Transverse colon (tissue), 4 donors: ENCODE measurements at regions of chr4 and their contacts with region 1.

Region 1: DNA sequence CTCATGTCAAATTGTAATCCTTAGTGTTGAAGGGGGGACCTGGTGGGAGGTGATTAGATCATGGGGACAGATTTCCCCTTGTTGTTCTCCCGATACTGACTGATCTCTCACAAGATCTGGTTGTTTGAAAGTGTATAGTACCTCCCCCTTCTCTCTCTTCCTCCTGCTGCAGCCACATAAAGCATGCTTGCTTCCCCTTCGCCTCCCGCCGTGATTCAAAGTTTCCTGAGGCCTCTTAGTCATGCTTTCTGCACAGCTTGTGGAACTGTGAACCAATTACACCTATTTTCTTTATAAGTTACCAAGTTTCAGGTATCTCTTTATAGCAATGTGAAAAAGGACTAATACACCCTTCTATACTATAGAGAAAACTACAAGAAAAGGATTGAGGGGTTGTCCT is 1170.5 kb upstream of the AGA start:
- DNase-seq: no peak
- H3K4me3 ChIP-seq: no peak overlapping the region
- H3K27ac ChIP-seq: no peak overlapping the region
- H3K4me1 ChIP-seq: no peaks in the 10 kb centered on the region
- H3K27me3 ChIP-seq: no peaks in the 10 kb centered on the region
- CTCF ChIP-seq: no peak
- EP300 ChIP-seq: no peak
- POLR2A ChIP-seq: no peak

Region 2: DNA sequence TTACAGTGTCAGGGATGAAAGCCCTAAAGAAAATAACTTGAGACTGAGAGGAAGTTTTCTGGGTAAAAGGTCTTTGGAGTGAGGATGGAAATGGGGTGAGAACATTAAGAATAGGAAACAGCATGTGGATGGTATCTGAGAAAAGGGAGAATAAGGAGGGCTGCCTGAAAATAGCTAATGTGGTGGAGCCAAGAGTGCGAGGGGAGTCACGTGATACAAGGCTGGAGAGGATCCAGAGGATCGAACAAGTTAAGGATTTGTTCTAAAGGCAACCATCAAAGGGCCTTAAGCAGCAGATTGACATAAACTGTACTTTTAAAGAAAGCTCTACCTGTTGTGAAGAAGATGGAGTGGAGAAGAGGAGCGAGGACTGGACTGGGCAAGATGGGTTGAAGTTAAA is 823.1 kb before region 1 on chr4:
- in situ Hi-C with region 1: no loop called
- intact Hi-C with region 1: loop called (anchors 5 kb)
- DNase-seq: no peak
- H3K4me3 ChIP-seq: no peak overlapping the region
- H3K27ac ChIP-seq: no peak overlapping the region
- H3K4me1 ChIP-seq: peaks cover 0 to 4% (median 0%) of the 10 kb centered on the region in 4 donors
- H3K27me3 ChIP-seq: no peaks in the 10 kb centered on the region
- CTCF ChIP-seq: no peak
- EP300 ChIP-seq: no peak
- POLR2A ChIP-seq: no peak